CD4-positive, alpha-beta memory T cell (primary cell): ENCODE measurements at regions of chr2 and their contacts with region 1.

Region 1: GRCh38 chr2:197191177-197191939 is 119.2 kb downstream of the ANKRD44 start:
- DNase-seq: peak in 4 of 5 donors; percentile 69 to 75 (median 74)
- H3K4me3 ChIP-seq: no peak overlapping the region
- H3K4me3 Mint-ChIP-seq: peak overlapping the region in 7 of 8 donors; percentile 27 to 73 (median 60)
- H3K27ac ChIP-seq: peak overlapping the region; percentile 77
- H3K27ac Mint-ChIP-seq: peak overlapping the region; percentile 64 to 93 (median 89)
- H3K4me1 ChIP-seq: peaks cover 90% of the 10 kb centered on the region
- H3K4me1 Mint-ChIP-seq: peaks cover 64 to 85% (median 73%) of the 10 kb centered on the region in 4 donors
- H3K27me3 ChIP-seq: no peaks in the 10 kb centered on the region
- H3K27me3 Mint-ChIP-seq: no peaks in the 10 kb centered on the region

Region 2: DNA sequence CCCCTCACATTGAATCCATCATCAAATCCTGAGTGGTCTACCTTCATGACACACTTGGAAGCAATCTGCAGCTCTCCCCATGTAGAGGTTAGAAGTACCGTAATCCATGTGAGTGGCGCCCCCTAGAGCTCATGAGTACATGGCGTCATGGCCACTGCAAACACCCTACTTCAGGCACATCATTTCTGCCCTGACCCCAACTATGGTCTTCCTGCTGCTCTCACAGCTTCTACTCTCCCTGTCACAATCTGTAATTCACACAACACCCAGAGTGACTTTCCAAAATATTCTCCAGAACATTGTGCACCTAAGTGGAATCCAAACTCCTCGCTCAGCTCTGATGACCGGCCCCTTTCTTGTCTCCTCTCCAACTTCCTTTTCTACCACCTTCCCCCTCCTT is 22.7 kb before region 1 on chr2:
- CTCF ChIA-PET with region 1: interaction called, 10 read pairs
- POLR2A ChIA-PET with region 1: no interaction called
- intact Hi-C with region 1: no loop called
- DNase-seq: peak; percentile 45 to 73 (median 50)
- H3K4me3 ChIP-seq: no peak overlapping the region
- H3K4me3 Mint-ChIP-seq: peak overlapping the region in 4 of 8 donors; percentile 4 to 41 (median 28)
- H3K27ac ChIP-seq: peak overlapping the region; percentile 7
- H3K27ac Mint-ChIP-seq: peak overlapping the region; percentile 53 to 91 (median 81)
- H3K4me1 ChIP-seq: peaks cover 87% of the 10 kb centered on the region
- H3K4me1 Mint-ChIP-seq: peaks cover 52 to 84% (median 65%) of the 10 kb centered on the region in 4 donors
- H3K27me3 ChIP-seq: no peaks in the 10 kb centered on the region
- H3K27me3 Mint-ChIP-seq: no peaks in the 10 kb centered on the region

Region 3: DNA sequence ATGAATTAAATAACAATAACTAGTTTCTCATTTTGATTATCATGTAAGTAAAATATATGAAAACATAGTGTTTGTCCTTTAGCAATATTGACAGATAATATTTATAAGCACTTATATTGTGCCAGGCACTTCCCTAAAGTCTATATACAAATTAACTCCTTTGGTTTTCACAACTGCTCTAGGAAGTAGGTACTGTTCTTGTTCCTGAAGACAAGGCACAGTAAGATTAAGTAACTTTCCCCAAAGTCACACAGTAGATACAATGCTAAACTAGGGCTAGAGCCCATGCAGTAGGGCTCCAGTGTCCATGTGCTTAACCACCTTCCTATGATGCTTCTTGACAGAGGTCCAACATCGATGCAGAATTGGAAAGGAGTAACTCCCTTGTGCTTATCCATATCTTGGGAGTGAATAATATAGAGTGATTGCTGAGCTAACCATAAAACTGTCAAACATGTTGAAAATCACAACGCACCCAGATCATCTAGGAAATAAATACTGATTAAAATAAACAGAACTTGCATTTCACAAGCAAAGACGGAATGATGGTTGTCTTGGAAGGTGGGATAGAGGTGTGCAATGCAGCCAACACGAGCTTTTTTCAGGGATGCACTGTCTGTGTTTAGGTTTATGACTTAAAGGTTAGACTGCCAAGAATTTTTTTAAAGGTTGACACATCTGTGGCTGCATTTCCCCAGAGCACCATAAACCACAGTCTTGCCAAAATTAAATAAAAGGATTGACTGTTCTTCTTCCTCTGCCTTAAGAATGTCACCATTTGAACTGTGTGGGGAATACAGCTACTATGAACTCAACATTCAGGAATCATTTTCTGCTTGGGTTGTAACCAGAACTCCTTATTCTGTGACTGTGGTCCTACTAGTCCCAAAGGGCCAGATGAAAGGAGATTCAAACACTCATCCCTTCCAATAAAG is 38.4 kb after region 1 on chr2:
- CTCF ChIA-PET with region 1: interaction called, 14 read pairs
- POLR2A ChIA-PET with region 1: interaction called, 1,394 read pairs
- intact Hi-C with region 1: no loop called
- DNase-seq: no peak
- H3K4me3 ChIP-seq: no peak overlapping the region
- H3K4me3 Mint-ChIP-seq: peak overlapping the region in 5 of 8 donors; percentile 11 to 71 (median 29)
- H3K27ac ChIP-seq: no peak overlapping the region
- H3K27ac Mint-ChIP-seq: peak overlapping the region; percentile 22 to 65 (median 38)
- H3K4me1 ChIP-seq: peaks cover 99% of the 10 kb centered on the region
- H3K4me1 Mint-ChIP-seq: peaks cover 65 to 98% (median 85%) of the 10 kb centered on the region in 4 donors
- H3K27me3 ChIP-seq: no peaks in the 10 kb centered on the region
- H3K27me3 Mint-ChIP-seq: no peaks in the 10 kb centered on the region

Region 4: DNA sequence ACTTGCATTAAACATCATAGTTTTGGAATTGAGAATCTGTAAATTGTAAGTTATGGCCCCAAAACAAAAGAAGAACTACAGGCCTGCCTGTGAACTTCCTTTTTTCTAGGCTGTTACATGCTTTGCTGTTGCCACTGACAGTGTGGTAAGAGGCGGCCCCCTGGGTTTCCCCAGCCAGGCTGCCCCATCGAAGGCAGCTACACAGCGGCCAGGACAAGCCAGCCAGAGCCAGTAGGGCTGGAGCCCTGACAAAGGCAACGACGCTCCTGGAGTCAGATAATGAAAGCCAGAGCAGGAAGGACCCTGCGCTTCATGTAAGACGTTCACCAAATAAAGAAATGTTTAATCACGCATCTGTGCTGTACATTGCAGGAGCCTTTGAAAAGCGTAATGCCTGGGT is 64.2 kb after region 1 on chr2:
- CTCF ChIA-PET with region 1: interaction called, 15 read pairs
- POLR2A ChIA-PET with region 1: interaction called, 1,394 read pairs
- intact Hi-C with region 1: loop called (anchors 2 kb)
- DNase-seq: peak; percentile 64 to 92 (median 74)
- H3K4me3 ChIP-seq: peak overlapping the region in 1 of 2 donors; percentile 12
- H3K4me3 Mint-ChIP-seq: peak overlapping the region; percentile 61 to 92 (median 82)
- H3K27ac ChIP-seq: peak overlapping the region; percentile 70
- H3K27ac Mint-ChIP-seq: peak overlapping the region; percentile 93 to 98 (median 96)
- H3K4me1 ChIP-seq: peaks cover 86% of the 10 kb centered on the region
- H3K4me1 Mint-ChIP-seq: peaks cover 59 to 80% (median 69%) of the 10 kb centered on the region in 4 donors
- H3K27me3 ChIP-seq: no peaks in the 10 kb centered on the region
- H3K27me3 Mint-ChIP-seq: no peaks in the 10 kb centered on the region

Region 5: GRCh38 chr2:197378494-197379307 is 187.3 kb after region 1 on chr2:
- CTCF ChIA-PET with region 1: interaction called, 10 read pairs
- POLR2A ChIA-PET with region 1: no interaction called
- intact Hi-C with region 1: loop called (anchors 1 kb)
- DNase-seq: peak; percentile 60 to 69 (median 63)
- H3K4me3 ChIP-seq: no peak overlapping the region
- H3K4me3 Mint-ChIP-seq: no peak overlapping the region
- H3K27ac ChIP-seq: no peak overlapping the region
- H3K27ac Mint-ChIP-seq: peak overlapping the region in 2 of 7 donors; percentile 0 to 52
- H3K4me1 ChIP-seq: peaks cover 8% of the 10 kb centered on the region
- H3K4me1 Mint-ChIP-seq: peaks cover 5 to 12% (median 10%) of the 10 kb centered on the region in 4 donors
- H3K27me3 ChIP-seq: no peaks in the 10 kb centered on the region
- H3K27me3 Mint-ChIP-seq: peaks cover 1 to 3% of the 10 kb centered on the region in 2 donors